HepG2 (cell line): ENCODE measurements at regions of chr5 and their contacts with region 1.

Region 1: GRCh38 chr5:96284727-96285389 is 148.2 kb downstream of the PCSK1 start:
- DNase-seq: no peak
- ATAC-seq: no peak
- H3K4me3 ChIP-seq: no peak overlapping the region
- H3K27ac ChIP-seq: no peak overlapping the region
- H3K4me1 ChIP-seq: peaks cover 20% of the 10 kb centered on the region
- H3K27me3 ChIP-seq: no peaks in the 10 kb centered on the region
- CTCF ChIP-seq: no peak
- EP300 ChIP-seq: no peak
- POLR2A ChIP-seq: no peak
- RAD21 ChIP-seq: no peak

Region 2: GRCh38 chr5:95471942-95472341 is 812.9 kb before region 1 on chr5:
- CTCF ChIA-PET with region 1: no interaction called
- POLR2A ChIA-PET with region 1: no interaction called
- in situ Hi-C with region 1: no loop called
- intact Hi-C with region 1: no loop called
- DNase-seq: no peak
- ATAC-seq: peak; percentile 56
- H3K4me3 ChIP-seq: no peak overlapping the region
- H3K27ac ChIP-seq: no peak overlapping the region
- H3K4me1 ChIP-seq: no peaks in the 10 kb centered on the region
- H3K27me3 ChIP-seq: no peaks in the 10 kb centered on the region; a peak in 1 of 5 replicates
- CTCF ChIP-seq: no peak
- EP300 ChIP-seq: no peak
- POLR2A ChIP-seq: no peak
- RAD21 ChIP-seq: no peak

Region 3: GRCh38 chr5:95927927-95928723 is 356.7 kb before region 1 on chr5:
- CTCF ChIA-PET with region 1: no interaction called
- POLR2A ChIA-PET with region 1: no interaction called
- in situ Hi-C with region 1: no loop called
- intact Hi-C with region 1: no loop called
- DNase-seq: no peak
- ATAC-seq: no peak
- H3K4me3 ChIP-seq: no peak overlapping the region
- H3K27ac ChIP-seq: no peak overlapping the region
- H3K4me1 ChIP-seq: peaks cover 85% of the 10 kb centered on the region
- H3K27me3 ChIP-seq: no peaks in the 10 kb centered on the region
- CTCF ChIP-seq: no peak
- EP300 ChIP-seq: no peak
- POLR2A ChIP-seq: no peak
- RAD21 ChIP-seq: no peak

Region 4: DNA sequence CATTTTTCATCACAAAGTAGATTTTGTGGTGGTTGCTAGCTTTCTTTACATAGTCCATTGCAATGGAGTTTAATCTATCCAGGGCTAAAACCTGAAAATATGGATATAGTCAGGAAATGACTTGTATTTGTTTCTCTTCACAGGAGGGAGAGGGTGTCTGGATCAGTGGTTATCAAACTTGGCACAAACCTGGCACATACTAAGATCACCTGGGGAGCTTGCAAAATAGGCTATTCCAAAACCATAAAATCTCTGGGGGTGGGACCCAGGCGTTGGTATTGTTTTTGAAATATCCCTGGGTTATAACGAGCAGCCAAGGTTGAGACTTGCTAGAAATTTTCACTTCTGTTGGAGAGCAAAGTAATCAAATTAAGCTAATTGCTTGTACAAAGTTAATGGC is 31.7 kb before region 1 on chr5:
- CTCF ChIA-PET with region 1: no interaction called
- POLR2A ChIA-PET with region 1: no interaction called
- in situ Hi-C with region 1: no loop called
- intact Hi-C with region 1: loop called (anchors 1 kb)
- DNase-seq: no peak
- ATAC-seq: no peak
- H3K4me3 ChIP-seq: no peak overlapping the region
- H3K27ac ChIP-seq: no peak overlapping the region
- H3K4me1 ChIP-seq: peaks cover 27% of the 10 kb centered on the region
- H3K27me3 ChIP-seq: no peaks in the 10 kb centered on the region
- CTCF ChIP-seq: no peak
- EP300 ChIP-seq: no peak
- POLR2A ChIP-seq: no peak
- RAD21 ChIP-seq: no peak